B cell (primary cell): ENCODE measurements at regions of chr19 and their contacts with region 1.

Region 1: GRCh38 chr19:38559428-38560401 is 58.0 kb downstream of the MAP4K1 start:
- DNase-seq: peak; percentile 48
- ATAC-seq: peak; percentile 69
- H3K4me3 ChIP-seq: peak overlapping the region in 1 of 5 experiments; percentile 24
- H3K4me3 Mint-ChIP-seq: peak overlapping the region; percentile 66
- H3K27ac ChIP-seq: peak overlapping the region in 1 of 2 donors; percentile 43
- H3K27ac Mint-ChIP-seq: peak overlapping the region; percentile 92
- H3K4me1 ChIP-seq: peaks cover 8 to 33% of the 10 kb centered on the region in 2 donors
- H3K4me1 Mint-ChIP-seq: peaks cover 50% of the 10 kb centered on the region
- H3K27me3 ChIP-seq: peaks cover 0 to 12% (median 4%) of the 10 kb centered on the region in 4 experiments
- H3K27me3 Mint-ChIP-seq: no peaks in the 10 kb centered on the region
- CTCF ChIP-seq: no peak

Region 2: DNA sequence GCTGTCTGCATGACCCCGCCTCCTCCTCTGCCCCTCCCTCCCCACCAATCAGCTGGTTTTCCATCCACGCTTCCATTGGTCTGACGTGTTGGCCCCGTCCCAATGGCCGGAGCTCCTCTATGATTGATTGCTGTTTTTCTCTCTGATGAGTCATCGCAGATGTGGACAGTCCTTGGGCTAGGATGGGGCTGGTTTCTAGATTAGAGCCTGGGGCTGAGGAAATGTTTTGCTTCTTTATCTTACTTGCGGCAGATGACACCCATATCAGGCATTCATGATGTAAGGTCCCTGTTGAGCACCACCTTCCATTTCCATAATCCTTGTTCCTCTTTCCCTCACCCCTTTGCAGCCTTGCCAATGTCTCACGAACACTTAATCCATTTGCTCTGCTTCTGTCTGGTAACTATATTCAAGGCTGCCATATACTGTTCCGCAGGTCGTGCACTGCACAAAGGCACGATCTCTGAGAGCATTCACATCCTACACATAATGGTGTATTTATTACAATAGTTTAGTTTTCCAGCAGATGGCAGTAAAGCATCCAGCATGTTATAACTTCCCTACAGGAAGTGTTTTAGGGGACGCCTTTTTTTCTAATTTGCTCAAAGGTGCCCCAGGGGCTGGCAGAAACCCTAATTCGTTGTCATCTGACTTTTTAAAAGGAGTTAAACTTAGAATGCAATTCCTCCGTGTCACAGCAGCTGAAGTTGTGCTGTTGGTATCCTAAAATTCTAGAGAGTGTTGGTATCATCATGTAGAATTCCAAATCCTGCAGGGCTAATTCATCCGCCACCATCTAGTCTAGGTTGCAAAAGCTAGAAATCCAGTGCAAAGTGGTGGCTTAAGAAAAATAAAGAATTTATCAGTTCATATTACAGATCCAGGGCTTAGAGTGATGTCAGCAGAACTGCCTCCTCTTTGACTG is 15.4 kb before region 1 on chr19:
- CTCF ChIA-PET with region 1: interaction called, 6 read pairs
- POLR2A ChIA-PET with region 1: interaction called, 4 read pairs
- intact Hi-C with region 1: loop called (anchors 1 kb)
- DNase-seq: peak; percentile 78
- ATAC-seq: peak; percentile 81
- H3K4me3 ChIP-seq: peak overlapping the region in 1 of 5 experiments; percentile 38
- H3K4me3 Mint-ChIP-seq: no peak overlapping the region
- H3K27ac ChIP-seq: no peak overlapping the region
- H3K27ac Mint-ChIP-seq: peak overlapping the region; percentile 27
- H3K4me1 ChIP-seq: peaks cover 14 to 27% of the 10 kb centered on the region in 2 donors
- H3K4me1 Mint-ChIP-seq: peaks cover 21% of the 10 kb centered on the region
- H3K27me3 ChIP-seq: peaks cover 0 to 4% (median 0%) of the 10 kb centered on the region in 4 experiments
- H3K27me3 Mint-ChIP-seq: no peaks in the 10 kb centered on the region
- CTCF ChIP-seq: peak; percentile 76

Region 3: DNA sequence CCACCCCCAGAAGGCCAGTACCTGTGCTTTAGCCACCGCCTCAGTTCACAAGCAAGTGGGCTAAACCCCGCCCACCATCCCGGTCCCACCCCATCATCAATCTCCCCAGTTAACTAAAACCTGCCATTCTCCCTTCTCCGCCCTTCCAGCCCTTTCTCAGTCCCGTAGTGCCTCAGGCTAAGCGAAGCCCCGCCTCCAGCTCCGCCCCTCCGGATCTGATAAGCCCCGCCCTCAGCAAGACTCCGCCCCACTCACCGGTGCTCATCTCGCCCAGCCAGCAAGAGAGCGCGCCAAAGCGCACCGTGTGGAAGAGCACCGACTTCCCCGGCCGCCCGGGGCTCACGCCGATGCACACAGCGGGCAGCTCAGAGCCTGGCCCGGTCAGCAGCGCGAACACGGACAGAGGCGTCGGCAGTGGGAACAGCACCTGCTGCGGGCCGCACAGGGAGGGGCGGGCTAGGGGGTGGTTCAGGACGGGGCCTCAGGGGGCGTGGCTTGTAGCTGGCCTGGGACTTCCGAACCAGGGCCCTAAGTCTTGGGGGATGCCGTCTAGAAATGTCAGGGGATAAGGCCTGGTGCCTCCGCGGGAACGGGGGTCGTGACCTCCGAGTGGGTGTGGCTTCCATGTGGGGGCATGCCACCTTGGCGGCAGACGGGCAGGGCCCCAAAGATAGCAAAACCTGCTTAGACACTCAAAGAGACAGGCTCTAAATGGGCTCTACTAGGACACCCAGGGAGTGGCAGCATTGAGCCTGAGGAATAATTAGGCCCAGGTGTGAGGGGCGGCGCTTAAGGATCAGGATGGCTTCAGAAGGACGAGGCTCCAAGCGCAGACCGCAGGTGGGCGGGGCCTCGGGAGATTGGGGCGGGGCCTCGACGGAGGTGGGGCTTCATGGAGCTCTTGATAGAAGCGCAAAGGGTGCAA is 36.6 kb after region 1 on chr19:
- CTCF ChIA-PET with region 1: no interaction called
- POLR2A ChIA-PET with region 1: interaction called, 13 read pairs
- intact Hi-C with region 1: no loop called
- DNase-seq: no peak
- ATAC-seq: peak; percentile 41
- H3K4me3 ChIP-seq: no peak overlapping the region
- H3K4me3 Mint-ChIP-seq: no peak overlapping the region
- H3K27ac ChIP-seq: no peak overlapping the region
- H3K27ac Mint-ChIP-seq: no peak overlapping the region
- H3K4me1 ChIP-seq: no peaks in the 10 kb centered on the region
- H3K4me1 Mint-ChIP-seq: no peaks in the 10 kb centered on the region
- H3K27me3 ChIP-seq: no peaks in the 10 kb centered on the region
- H3K27me3 Mint-ChIP-seq: no peaks in the 10 kb centered on the region
- CTCF ChIP-seq: no peak

Region 4: DNA sequence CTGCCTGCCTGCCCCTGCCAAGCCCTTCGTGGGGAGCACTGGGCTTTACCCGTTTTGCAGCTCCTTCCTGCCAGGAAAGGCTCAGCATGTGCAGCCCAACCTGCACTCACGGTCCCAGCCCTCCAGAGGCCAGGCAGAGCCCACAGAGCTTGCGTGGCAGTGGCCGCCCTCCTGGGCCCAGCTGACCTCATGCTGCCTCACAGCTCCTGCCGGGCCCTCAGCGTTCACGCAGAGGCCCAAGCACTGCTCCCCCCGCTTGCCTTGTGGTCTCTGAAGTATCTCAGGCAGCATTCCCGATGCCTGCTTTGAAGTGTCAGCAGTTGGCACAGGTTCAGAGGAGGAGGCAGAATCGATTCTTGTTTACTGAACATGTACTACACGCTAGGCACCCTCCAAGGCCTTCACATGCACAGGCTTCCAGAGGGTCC is 152.0 kb after region 1 on chr19:
- CTCF ChIA-PET with region 1: no interaction called
- POLR2A ChIA-PET with region 1: no interaction called
- intact Hi-C with region 1: no loop called
- DNase-seq: no peak
- ATAC-seq: no peak
- H3K4me3 ChIP-seq: no peak overlapping the region
- H3K4me3 Mint-ChIP-seq: no peak overlapping the region
- H3K27ac ChIP-seq: no peak overlapping the region
- H3K27ac Mint-ChIP-seq: no peak overlapping the region
- H3K4me1 ChIP-seq: no peaks in the 10 kb centered on the region
- H3K4me1 Mint-ChIP-seq: no peaks in the 10 kb centered on the region
- H3K27me3 ChIP-seq: no peaks in the 10 kb centered on the region
- H3K27me3 Mint-ChIP-seq: no peaks in the 10 kb centered on the region
- CTCF ChIP-seq: no peak